Activated CD8-positive, alpha-beta T cell treated with anti-CD3 and anti-CD28 coated beads, Interleukin-2, amount 10 ng/mL, durations not matched to agents 7 days and 5 days (primary cell): ENCODE measurements at regions of chr17 and their contacts with region 1.

Region 1: DNA sequence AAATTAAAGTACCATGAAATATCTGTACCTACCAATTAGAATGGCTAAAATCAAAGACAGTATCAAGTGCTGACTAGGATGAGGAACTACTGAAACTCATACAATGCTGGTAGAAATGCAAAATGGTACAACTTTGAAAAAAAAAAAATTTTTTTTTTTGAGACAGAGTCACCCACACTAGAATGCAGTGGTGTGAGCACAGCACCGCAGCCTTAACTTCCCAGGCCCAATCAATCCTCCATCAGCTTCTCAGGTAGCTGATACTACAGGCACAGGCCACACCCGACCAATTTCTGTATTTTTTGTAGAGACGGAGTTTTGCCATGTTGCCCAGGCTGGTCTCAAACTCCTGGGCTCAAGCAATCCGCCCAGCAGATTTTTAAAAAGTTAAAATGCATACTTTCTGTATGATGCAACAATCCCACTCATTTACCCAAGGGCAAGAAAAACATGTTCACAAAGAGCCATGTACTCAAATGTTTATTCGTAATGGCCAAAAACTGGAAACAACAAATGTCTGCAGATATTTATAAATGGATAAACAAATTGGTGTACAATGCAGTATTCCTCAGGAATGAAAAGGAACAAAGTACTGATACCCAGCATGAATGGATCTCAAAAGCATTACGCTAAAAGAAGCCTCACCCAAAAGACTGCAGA is 8.7 kb downstream of the SMURF2 start:
- DNase-seq: no peak
- ATAC-seq: no peak
- H3K4me3 Mint-ChIP-seq: no peak overlapping the region
- H3K27ac Mint-ChIP-seq: no peak overlapping the region
- H3K4me1 Mint-ChIP-seq: peaks cover 46% of the 10 kb centered on the region
- H3K27me3 Mint-ChIP-seq: no peaks in the 10 kb centered on the region

Region 2: DNA sequence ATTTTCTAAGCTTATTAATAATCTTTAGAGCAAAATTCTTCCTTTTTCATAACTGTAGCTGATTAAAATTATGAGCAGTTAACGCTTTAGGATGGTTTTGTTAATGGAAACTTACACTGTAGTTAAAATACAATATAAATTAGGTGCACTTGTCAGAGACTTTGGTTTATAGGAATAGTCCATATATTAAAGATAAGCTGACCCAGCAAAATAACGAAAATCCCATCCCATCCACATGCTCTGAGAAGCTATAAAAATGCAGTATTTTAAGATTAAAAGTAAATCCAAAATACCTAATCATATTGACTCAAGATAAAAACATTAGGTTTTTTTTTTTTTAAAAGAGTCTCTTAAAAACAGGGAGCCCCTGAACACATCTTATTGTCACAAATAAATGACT is 108.7 kb before region 1 on chr17:
- CTCF ChIA-PET with region 1: interaction called, 10 read pairs
- POLR2A ChIA-PET with region 1: no interaction called
- DNase-seq: no peak
- ATAC-seq: no peak
- H3K4me3 Mint-ChIP-seq: no peak overlapping the region
- H3K27ac Mint-ChIP-seq: no peak overlapping the region
- H3K4me1 Mint-ChIP-seq: no peaks in the 10 kb centered on the region
- H3K27me3 Mint-ChIP-seq: no peaks in the 10 kb centered on the region

Region 3: DNA sequence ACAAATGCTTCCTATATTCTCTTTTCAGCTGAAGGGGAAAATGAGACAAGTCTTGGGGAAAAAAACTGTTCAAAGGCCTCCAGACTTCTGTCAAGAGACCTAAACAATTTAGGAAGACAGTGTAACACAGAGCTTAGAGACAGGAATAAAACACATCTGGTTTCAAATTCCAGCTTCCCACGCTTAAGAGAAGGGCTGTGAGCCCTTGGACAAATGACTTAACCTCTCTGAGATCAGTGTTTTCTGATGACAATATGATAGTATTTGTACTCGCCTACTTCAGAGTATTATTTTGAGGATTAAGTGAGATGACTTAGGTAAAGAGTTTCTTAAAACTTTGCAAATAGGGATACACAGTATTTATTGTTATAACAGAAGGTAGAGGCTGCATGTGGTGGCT is 20.8 kb before region 1 on chr17:
- CTCF ChIA-PET with region 1: interaction called, 17 read pairs
- POLR2A ChIA-PET with region 1: interaction called, 3 read pairs
- DNase-seq: no peak
- ATAC-seq: no peak
- H3K4me3 Mint-ChIP-seq: no peak overlapping the region
- H3K27ac Mint-ChIP-seq: no peak overlapping the region
- H3K4me1 Mint-ChIP-seq: peaks cover 43% of the 10 kb centered on the region
- H3K27me3 Mint-ChIP-seq: no peaks in the 10 kb centered on the region

Region 4: DNA sequence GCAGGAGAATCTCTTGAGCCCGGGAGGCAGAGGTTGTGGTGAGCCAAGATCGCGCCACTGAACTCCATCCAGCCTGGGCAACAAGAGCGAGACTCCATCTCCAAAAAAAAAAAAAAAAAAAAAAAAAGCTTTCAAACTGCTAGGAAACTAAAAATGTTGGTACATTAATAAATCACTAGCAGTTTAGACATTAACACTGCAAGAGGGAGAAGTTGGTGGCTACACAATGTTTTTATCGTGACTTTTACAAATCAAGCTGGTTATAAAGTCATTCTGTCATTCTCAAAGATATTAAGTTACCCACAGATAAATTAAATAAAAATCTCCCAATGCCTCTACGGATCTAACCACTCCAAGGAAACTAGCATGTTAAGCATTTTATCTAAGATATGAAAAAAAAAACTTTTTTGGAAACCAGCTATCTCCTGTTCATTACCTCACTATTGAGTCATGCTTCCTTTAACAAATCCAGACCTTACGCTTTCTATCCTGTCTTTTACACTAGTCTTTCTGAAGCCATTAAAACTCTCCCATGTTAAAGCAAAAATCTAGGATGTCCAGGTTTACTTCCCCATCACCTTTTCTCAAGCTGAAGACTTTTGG is 94.6 kb after region 1 on chr17:
- CTCF ChIA-PET with region 1: no interaction called
- POLR2A ChIA-PET with region 1: no interaction called
- DNase-seq: no peak
- ATAC-seq: no peak
- H3K4me3 Mint-ChIP-seq: no peak overlapping the region
- H3K27ac Mint-ChIP-seq: no peak overlapping the region
- H3K4me1 Mint-ChIP-seq: peaks cover 10% of the 10 kb centered on the region
- H3K27me3 Mint-ChIP-seq: no peaks in the 10 kb centered on the region